Activated naive CD4-positive, alpha-beta T cell treated with anti-CD3 and anti-CD28 coated beads for 36 hours (primary cell): ENCODE measurements at regions of chr10 and their contacts with region 1.

Region 1: GRCh38 chr10:30671026-30671616 is 41.6 kb upstream of the LYZL2 start:
- DNase-seq: peak; percentile 49
- H3K4me3 Mint-ChIP-seq: peak overlapping the region; percentile 32
- H3K27ac Mint-ChIP-seq: no peak overlapping the region
- H3K4me1 Mint-ChIP-seq: peaks cover 3% of the 10 kb centered on the region
- H3K27me3 Mint-ChIP-seq: peaks cover 9% of the 10 kb centered on the region

Region 2: DNA sequence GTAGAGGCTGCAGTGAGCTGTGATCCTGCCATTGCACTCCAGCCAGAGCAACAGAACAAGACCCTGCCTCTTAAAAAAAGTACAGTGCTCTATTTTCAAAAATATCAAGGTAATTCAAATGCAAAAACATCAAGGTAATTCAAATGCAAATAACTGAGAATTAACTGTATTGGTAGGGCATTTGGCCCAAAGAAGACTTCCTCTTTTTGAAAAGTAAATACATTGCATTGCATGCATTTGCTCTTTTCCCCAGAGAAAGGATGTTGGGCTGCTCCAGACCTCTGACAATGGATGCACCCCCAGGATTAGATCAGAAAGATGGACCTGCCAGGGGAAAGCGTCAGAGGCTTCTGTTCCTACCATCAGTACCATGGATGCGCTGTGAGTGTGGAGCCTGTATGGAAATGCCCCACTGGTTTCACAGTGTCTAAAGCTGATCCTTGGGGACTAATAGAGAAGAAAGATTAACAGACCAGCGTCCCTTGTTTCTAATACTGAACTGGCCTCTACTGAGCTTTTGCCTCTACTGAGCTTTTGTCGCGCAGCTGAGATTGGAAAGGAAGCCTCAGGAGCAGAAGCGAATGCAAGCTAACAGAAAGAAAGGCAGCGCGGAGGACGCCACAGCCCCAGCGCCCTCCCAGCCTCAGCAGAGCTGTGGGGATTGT is 52.0 kb after region 1 on chr10:
- CTCF ChIA-PET with region 1: interaction called, 16 read pairs
- intact Hi-C with region 1: loop called (anchors 1 kb)
- DNase-seq: no peak
- H3K4me3 Mint-ChIP-seq: no peak overlapping the region
- H3K27ac Mint-ChIP-seq: no peak overlapping the region
- H3K4me1 Mint-ChIP-seq: no peaks in the 10 kb centered on the region
- H3K27me3 Mint-ChIP-seq: no peaks in the 10 kb centered on the region

Region 3: DNA sequence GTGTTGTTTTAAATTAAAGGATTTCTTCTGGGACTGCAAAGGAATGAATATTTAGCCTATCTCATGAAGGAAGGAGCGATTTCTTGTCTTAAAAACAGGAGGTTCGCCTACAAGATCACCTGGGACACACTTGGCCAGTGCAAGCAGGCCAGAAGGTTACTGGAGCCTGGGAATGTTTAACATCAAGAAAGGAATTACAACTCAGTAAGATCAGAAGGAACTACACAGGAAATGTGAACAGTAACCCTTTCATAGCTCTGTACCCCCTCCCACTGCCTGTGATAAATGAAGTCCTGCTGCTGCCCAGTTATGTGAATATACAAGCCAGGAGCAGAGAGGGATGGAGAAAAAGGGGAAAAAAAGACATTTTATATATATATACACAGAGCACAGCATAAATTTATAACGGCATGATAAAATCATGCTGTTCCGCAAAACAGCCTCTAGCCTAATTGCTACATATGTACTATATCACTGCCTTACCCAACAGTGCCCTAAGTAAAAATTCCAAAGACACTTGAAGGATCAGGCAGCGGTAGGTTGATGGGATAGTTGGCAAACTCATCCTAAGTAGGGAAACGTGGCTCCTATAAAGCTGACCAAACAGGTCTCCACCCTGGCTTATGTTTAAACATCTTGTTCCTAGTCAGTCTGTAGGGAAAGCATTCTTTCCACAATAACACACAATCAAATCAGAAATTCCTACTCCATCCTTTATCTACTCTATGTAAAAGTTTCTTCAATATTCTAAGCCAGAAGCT is 296.7 kb after region 1 on chr10:
- CTCF ChIA-PET with region 1: no interaction called
- intact Hi-C with region 1: no loop called
- DNase-seq: no peak
- H3K4me3 Mint-ChIP-seq: no peak overlapping the region
- H3K27ac Mint-ChIP-seq: no peak overlapping the region
- H3K4me1 Mint-ChIP-seq: peaks cover 16% of the 10 kb centered on the region
- H3K27me3 Mint-ChIP-seq: no peaks in the 10 kb centered on the region